Spleen (tissue), 13 donors: ENCODE measurements at regions of chr16 and their contacts with region 1.

Region 1: GRCh38 chr16:57519796-57520360 is 16.5 kb downstream of the CCDC102A start:
- DNase-seq: peak; percentile 95
- H3K4me3 ChIP-seq: no peak overlapping the region
- H3K27ac ChIP-seq: no peak overlapping the region
- H3K4me1 ChIP-seq: peaks cover 0 to 48% (median 23%) of the 10 kb centered on the region in 6 donors
- H3K27me3 ChIP-seq: no peaks in the 10 kb centered on the region
- CTCF ChIP-seq: peak; percentile 83 to 98 (median 97)
- POLR2A ChIP-seq: no peak

Region 2: GRCh38 chr16:57226701-57227621 is 292.9 kb before region 1 on chr16:
- intact Hi-C with region 1: no loop called
- DNase-seq: no peak
- H3K4me3 ChIP-seq: no peak overlapping the region
- H3K27ac ChIP-seq: no peak overlapping the region
- H3K4me1 ChIP-seq: no peaks in the 10 kb centered on the region
- H3K27me3 ChIP-seq: no peaks in the 10 kb centered on the region
- CTCF ChIP-seq: no peak
- POLR2A ChIP-seq: no peak

Region 3: GRCh38 chr16:57300387-57301125 is 219.3 kb before region 1 on chr16:
- intact Hi-C with region 1: loop called (anchors 5 kb)
- DNase-seq: peak; percentile 99
- H3K4me3 ChIP-seq: peak overlapping the region; percentile 25 to 66 (median 46)
- H3K27ac ChIP-seq: peak overlapping the region; percentile 89 to 95 (median 90)
- H3K4me1 ChIP-seq: peaks cover 13 to 50% (median 35%) of the 10 kb centered on the region in 6 donors
- H3K27me3 ChIP-seq: peaks cover 0 to 6% (median 0%) of the 10 kb centered on the region in 7 donors
- CTCF ChIP-seq: peak; percentile 94 to 100 (median 99)
- POLR2A ChIP-seq: peak in 2 of 3 donors; percentile 40 to 67

Region 4: GRCh38 chr16:57422026-57422944 is 97.6 kb before region 1 on chr16:
- intact Hi-C with region 1: loop called (anchors 2 kb)
- DNase-seq: no peak
- H3K4me3 ChIP-seq: no peak overlapping the region
- H3K27ac ChIP-seq: peak overlapping the region in 1 of 8 donors; percentile 46
- H3K4me1 ChIP-seq: peaks cover 5 to 30% (median 15%) of the 10 kb centered on the region in 6 donors
- H3K27me3 ChIP-seq: no peaks in the 10 kb centered on the region
- CTCF ChIP-seq: peak in 7 of 11 experiments; percentile 22 to 50 (median 35)
- POLR2A ChIP-seq: no peak

Region 5: GRCh38 chr16:57462209-57462977 is 57.5 kb before region 1 on chr16 and contains the start of gene POLR2C:
- intact Hi-C with region 1: loop called (anchors 10 kb)
- DNase-seq: peak; percentile 98
- H3K4me3 ChIP-seq: peak within 1 kb of the TSS; percentile 86 to 97 (median 90)
- H3K27ac ChIP-seq: peak within 1 kb of the TSS; percentile 80 to 94 (median 90)
- H3K4me1 ChIP-seq: peaks cover 12 to 47% (median 28%) of the 10 kb centered on the region in 6 donors
- H3K27me3 ChIP-seq: no peaks in the 10 kb centered on the region
- CTCF ChIP-seq: peak; percentile 95 to 99 (median 98)
- POLR2A ChIP-seq: peak; percentile 60 to 91 (median 85)
- total RNA-seq, gene POLR2C: 42.3 to 75.6 (median 52.7) TPM

Region 6: GRCh38 chr16:57591086-57591869 is 71.4 kb after region 1 on chr16:
- intact Hi-C with region 1: no loop called
- DNase-seq: peak; percentile 89
- H3K4me3 ChIP-seq: no peak overlapping the region
- H3K27ac ChIP-seq: peak overlapping the region in 4 of 8 donors; percentile 25 to 86 (median 72)
- H3K4me1 ChIP-seq: peaks cover 6 to 43% (median 24%) of the 10 kb centered on the region in 6 donors
- H3K27me3 ChIP-seq: peaks cover 0 to 14% (median 0%) of the 10 kb centered on the region in 7 donors
- CTCF ChIP-seq: peak; percentile 80 to 97 (median 88)
- POLR2A ChIP-seq: no peak